ENCODE measurements at regions of chr9 and their contacts with region 1.

Region 1: GRCh38 chr9:37592108-37592951 is at the start of gene TOMM5:
- DNase-seq: peak; percentile 93 to 96
- H3K4me3 ChIP-seq: peak within 1 kb of the TSS; percentile 90
- H3K4me3 Mint-ChIP-seq: peak within 1 kb of the TSS; percentile 98
- H3K27ac Mint-ChIP-seq: peak within 1 kb of the TSS; percentile 99
- H3K4me1 ChIP-seq: peaks cover 13% of the 10 kb centered on the region
- H3K4me1 Mint-ChIP-seq: peaks cover 19% of the 10 kb centered on the region
- H3K27me3 ChIP-seq: no peaks in the 10 kb centered on the region
- H3K27me3 Mint-ChIP-seq: no peaks in the 10 kb centered on the region
- CTCF ChIP-seq: no peak
- total RNA-seq, gene TOMM5: 185 and 201 TPM in 2 replicates

Region 2: DNA sequence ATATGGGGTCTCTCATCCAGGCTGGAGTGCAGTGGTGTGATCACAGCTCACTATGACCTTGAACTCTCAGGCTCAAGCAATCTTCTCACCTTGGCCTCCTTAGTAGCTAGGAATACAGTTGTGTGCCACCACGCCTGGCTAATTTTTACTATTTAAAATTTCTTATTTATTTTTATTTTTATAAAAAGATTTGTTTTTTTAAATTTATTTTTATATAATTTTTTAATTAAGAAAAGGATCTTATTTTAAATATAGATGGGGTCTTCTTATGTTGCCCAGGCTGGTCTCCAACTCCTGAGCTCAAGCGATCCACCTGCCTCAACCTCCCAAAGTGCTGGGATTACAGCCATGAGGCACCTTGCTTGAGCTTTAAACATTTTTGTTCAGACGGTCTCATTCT is 474.4 kb before region 1 on chr9:
- CTCF ChIA-PET with region 1: no interaction called
- POLR2A ChIA-PET with region 1: no interaction called
- intact Hi-C with region 1: no loop called
- DNase-seq: no peak
- H3K4me3 ChIP-seq: no peak overlapping the region
- H3K4me3 Mint-ChIP-seq: no peak overlapping the region
- H3K27ac Mint-ChIP-seq: no peak overlapping the region
- H3K4me1 ChIP-seq: 0 out of 2 replicates have a peak, but pooled peaks cover 5% of the 10 kb centered on the region
- H3K4me1 Mint-ChIP-seq: peaks cover 20% of the 10 kb centered on the region
- H3K27me3 ChIP-seq: no peaks in the 10 kb centered on the region
- H3K27me3 Mint-ChIP-seq: no peaks in the 10 kb centered on the region
- CTCF ChIP-seq: no peak

Region 3: GRCh38 chr9:37562826-37563225 is 29.5 kb before region 1 on chr9:
- CTCF ChIA-PET with region 1: no interaction called
- POLR2A ChIA-PET with region 1: no interaction called
- intact Hi-C with region 1: no loop called
- DNase-seq: no peak
- H3K4me3 ChIP-seq: no peak overlapping the region
- H3K4me3 Mint-ChIP-seq: no peak overlapping the region
- H3K27ac Mint-ChIP-seq: no peak overlapping the region
- H3K4me1 ChIP-seq: no peaks in the 10 kb centered on the region
- H3K4me1 Mint-ChIP-seq: no peaks in the 10 kb centered on the region
- H3K27me3 ChIP-seq: no peaks in the 10 kb centered on the region
- H3K27me3 Mint-ChIP-seq: no peaks in the 10 kb centered on the region
- CTCF ChIP-seq: no peak

Region 4: DNA sequence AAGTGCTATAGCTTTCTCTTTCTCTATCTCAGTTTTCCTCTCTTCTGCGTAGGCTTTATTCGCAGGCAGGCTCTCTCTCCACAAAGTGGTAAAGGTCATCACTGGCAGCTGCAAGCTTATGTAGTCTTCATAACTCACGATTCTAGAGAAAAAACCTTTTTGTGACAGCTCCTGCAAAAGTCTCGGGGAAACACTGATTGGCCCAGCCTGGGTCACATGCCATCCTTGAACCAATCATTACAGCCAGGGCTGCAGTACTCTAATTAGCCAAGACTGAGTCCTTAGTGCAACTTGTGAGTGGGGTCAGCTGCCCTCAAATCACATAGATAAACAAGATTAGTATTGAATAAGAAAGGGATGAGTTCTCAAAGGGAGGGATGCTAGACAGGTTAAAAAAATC is 40.1 kb after region 1 on chr9:
- CTCF ChIA-PET with region 1: interaction called, 3 read pairs
- POLR2A ChIA-PET with region 1: no interaction called
- intact Hi-C with region 1: loop called (anchors 5 kb)
- DNase-seq: no peak
- H3K4me3 ChIP-seq: no peak overlapping the region
- H3K4me3 Mint-ChIP-seq: no peak overlapping the region
- H3K27ac Mint-ChIP-seq: no peak overlapping the region
- H3K4me1 ChIP-seq: no peaks in the 10 kb centered on the region
- H3K4me1 Mint-ChIP-seq: no peaks in the 10 kb centered on the region
- H3K27me3 ChIP-seq: no peaks in the 10 kb centered on the region
- H3K27me3 Mint-ChIP-seq: peaks cover 11% of the 10 kb centered on the region
- CTCF ChIP-seq: no peak

Region 5: DNA sequence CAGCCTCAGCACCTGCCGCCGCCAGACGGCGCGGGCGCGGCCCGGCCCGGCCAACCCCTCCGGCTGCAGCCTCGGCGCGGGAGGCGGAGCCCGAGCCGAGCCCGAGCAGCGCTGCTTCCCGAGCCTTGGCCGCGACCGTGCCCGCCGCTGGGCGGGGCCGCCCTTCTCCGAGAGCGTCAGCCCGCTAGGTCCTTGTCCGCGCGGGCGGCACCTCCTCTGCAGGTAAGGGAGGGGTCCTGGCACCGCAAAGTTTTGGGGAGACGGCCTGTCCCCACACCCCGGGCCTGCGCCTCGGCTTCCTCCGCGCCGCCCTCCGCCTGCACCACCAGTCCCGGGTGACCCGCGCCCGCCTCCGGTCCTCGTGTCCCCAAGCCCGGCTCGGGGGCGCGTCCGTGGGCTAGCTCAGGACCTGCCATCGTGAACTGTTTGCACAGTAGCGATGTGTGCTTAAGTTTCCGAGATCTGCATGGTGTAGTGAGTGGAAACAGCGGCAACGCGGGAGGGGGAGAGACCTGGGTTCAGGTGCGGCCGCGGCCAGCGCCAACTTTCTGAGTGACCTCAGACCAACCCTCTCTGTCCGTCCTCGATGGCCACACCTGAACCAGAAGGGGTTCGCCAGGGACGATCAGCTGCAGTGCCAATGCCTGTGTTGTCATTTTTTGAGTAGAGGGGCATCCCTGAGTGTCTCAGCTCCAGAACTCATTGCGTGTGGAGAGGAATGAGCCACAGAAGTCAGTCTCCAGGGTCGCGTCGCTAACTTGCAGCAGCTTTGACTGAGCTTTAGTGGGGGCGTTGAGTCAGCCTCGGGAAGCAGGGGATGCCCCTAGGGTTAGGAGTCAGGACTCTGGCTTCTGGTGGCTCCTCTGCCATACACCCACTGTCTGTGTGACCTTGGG is 58.8 kb after region 1 on chr9 and contains the start of gene FRMPD1:
- CTCF ChIA-PET with region 1: no interaction called
- POLR2A ChIA-PET with region 1: no interaction called
- intact Hi-C with region 1: loop called (anchors 5 kb)
- DNase-seq: peak; percentile 50 to 83
- H3K4me3 ChIP-seq: peak within 1 kb of the TSS; percentile 60
- H3K4me3 Mint-ChIP-seq: peak within 1 kb of the TSS; percentile 71
- H3K27ac Mint-ChIP-seq: no peak within 1 kb of the TSS
- H3K4me1 ChIP-seq: peaks cover 4% of the 10 kb centered on the region
- H3K4me1 Mint-ChIP-seq: no peaks in the 10 kb centered on the region
- H3K27me3 ChIP-seq: peaks cover 1% of the 10 kb centered on the region
- H3K27me3 Mint-ChIP-seq: peaks cover 41% of the 10 kb centered on the region
- CTCF ChIP-seq: no peak
- total RNA-seq, gene FRMPD1: not detected in 2 replicates

Region 6: DNA sequence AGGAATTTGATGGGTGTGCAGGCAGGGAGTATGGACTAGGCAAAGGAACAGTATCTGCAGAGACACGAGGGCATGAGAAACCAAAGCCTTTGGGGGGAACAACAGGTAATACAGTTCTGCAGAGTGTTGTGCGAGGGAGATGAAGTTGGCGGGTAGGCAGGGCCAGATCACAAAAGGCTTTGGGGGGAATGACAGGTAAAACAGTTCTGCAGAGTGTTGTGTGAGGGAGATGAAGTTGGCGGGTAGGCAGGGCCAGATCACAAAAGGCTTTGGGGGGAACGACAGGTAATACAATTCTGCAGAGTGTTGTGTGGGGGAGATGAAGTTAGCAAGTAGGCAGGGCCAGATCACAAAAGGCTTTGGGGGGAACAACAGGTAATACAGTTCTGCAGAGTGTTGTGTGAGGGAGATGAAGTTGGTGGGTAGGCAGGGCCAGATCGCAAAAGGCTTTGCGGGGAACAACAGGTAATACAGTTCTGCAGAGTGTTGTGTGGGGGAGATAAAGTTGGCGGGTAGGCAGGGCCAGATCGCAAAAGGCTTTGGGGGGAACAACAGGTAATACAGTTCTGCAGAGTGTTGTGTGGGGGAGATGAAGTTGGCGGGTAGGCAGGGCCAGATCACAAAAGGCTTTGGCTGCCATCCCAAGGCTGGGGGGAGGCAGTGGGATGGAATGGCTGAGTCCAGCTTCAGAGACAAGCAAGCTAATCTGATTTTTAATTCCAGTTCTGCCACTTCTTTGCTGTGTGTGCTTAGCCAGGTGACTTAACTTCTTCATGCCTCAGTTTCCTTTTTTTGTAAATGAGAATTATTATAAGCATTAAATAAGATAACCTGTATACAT is 91.4 kb after region 1 on chr9:
- CTCF ChIA-PET with region 1: no interaction called
- POLR2A ChIA-PET with region 1: no interaction called
- intact Hi-C with region 1: no loop called
- DNase-seq: no peak
- H3K4me3 ChIP-seq: no peak overlapping the region
- H3K4me3 Mint-ChIP-seq: no peak overlapping the region
- H3K27ac Mint-ChIP-seq: no peak overlapping the region
- H3K4me1 ChIP-seq: no peaks in the 10 kb centered on the region
- H3K4me1 Mint-ChIP-seq: no peaks in the 10 kb centered on the region
- H3K27me3 ChIP-seq: peaks cover 1% of the 10 kb centered on the region
- H3K27me3 Mint-ChIP-seq: peaks cover 30% of the 10 kb centered on the region
- CTCF ChIP-seq: no peak